ENCODE measurements at regions of chr16 and their contacts with region 1.

Region 1: DNA sequence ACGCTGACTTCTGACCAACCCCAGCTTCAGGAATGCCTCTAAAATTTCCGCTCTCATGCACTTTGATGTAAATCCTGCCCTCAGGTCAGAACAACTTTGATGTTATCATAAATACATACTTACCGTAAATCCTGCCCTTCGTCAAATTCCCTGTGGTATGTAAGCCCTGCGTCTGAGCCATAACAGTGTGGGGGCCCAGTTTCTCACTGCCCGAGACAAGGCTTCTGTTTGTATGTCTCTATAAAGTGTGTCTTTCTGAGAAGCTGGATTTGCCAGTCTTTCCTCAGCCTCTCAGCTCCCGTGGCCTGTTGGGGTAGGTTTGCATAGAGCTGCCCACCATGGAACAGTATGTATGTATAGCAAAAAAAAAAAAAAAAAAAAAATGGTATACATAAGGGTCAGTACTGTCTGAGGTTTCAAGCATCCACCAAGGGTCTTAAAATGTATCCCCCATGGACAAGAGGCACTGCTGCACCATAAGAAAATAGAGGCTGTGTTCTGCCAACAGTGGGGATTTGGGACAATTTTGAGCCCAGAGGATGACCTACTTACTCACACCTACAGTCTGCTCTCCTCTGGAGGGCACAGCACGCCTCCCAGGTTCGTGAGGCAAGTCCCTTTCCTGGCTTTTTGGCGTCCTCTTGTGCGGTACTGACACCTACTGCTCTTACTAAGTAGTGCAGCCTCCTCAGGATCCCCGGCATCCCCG is 17.5 kb downstream of the PRMT7 start:
- DNase-seq: peak; percentile 74
- H3K4me3 ChIP-seq: no peak overlapping the region
- H3K27ac ChIP-seq: no peak overlapping the region
- H3K4me1 ChIP-seq: peaks cover 4% of the 10 kb centered on the region
- H3K27me3 ChIP-seq: no peaks in the 10 kb centered on the region
- CTCF ChIP-seq: peak; percentile 94 to 98

Region 2: GRCh38 chr16:67993189-67994039 is 334.9 kb before region 1 on chr16:
- CTCF ChIA-PET with region 1: no interaction called
- dilution Hi-C with region 1: no loop called
- in situ Hi-C with region 1: no loop called
- intact Hi-C with region 1: loop called (anchors 2 kb)
- DNase-seq: peak; percentile 38
- H3K4me3 ChIP-seq: peak overlapping the region in 1 of 3 experiments; percentile 30
- H3K27ac ChIP-seq: no peak overlapping the region
- H3K4me1 ChIP-seq: peaks cover 8% of the 10 kb centered on the region
- H3K27me3 ChIP-seq: no peaks in the 10 kb centered on the region
- CTCF ChIP-seq: peak; percentile 66 to 94

Region 3: GRCh38 chr16:68227183-68227793 is 101.0 kb before region 1 on chr16:
- CTCF ChIA-PET with region 1: no interaction called
- dilution Hi-C with region 1: no loop called
- in situ Hi-C with region 1: no loop called
- intact Hi-C with region 1: no loop called
- DNase-seq: no peak
- H3K4me3 ChIP-seq: no peak overlapping the region
- H3K27ac ChIP-seq: no peak overlapping the region
- H3K4me1 ChIP-seq: no peaks in the 10 kb centered on the region
- H3K27me3 ChIP-seq: no peaks in the 10 kb centered on the region
- CTCF ChIP-seq: no peak

Region 4: DNA sequence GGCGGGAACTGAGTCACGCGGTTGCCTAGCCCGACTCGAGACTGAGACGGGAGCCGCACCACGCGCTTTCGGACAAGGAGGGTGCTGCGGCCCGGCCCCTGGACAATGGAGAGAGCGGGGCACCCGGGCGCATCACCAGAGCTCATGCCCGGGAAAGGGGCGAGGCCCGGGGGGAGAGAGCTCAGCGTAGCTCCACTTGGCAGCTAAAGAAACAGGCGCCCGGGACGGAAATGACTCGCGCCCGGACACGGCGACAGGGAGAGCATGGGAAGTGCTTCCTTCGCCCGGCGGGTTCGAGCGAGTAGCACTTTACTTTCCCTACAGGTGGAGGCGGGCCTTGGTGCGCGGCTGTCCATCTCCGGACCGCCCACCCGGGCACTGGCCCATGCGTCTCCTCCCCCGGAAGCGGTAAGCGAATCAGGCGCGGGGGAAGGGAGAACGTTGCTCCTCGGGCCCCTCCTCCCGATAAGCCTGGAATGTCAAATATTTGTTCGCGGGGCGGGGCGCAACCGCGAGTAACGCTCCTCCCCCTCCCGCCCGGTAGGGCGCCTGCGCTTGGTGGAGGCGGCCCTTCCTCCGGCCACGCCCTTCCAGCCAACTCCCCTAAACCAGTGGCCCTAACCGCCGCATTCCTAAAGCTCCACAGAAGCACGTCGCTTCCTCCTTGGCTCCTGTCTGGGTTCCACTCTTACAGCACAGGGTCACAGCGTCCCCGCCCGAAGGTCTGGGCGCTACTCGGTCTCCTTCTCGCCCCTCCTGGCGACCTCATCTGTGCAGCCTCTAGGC is 90.9 kb before region 1 on chr16:
- CTCF ChIA-PET with region 1: no interaction called
- dilution Hi-C with region 1: no loop called
- in situ Hi-C with region 1: no loop called
- intact Hi-C with region 1: loop called (anchors 1 kb)
- DNase-seq: peak; percentile 99
- H3K4me3 ChIP-seq: peak overlapping the region; percentile 67 to 69 (median 67)
- H3K27ac ChIP-seq: peak overlapping the region; percentile 82
- H3K4me1 ChIP-seq: peaks cover 36% of the 10 kb centered on the region
- H3K27me3 ChIP-seq: no peaks in the 10 kb centered on the region
- CTCF ChIP-seq: no peak

Region 5: DNA sequence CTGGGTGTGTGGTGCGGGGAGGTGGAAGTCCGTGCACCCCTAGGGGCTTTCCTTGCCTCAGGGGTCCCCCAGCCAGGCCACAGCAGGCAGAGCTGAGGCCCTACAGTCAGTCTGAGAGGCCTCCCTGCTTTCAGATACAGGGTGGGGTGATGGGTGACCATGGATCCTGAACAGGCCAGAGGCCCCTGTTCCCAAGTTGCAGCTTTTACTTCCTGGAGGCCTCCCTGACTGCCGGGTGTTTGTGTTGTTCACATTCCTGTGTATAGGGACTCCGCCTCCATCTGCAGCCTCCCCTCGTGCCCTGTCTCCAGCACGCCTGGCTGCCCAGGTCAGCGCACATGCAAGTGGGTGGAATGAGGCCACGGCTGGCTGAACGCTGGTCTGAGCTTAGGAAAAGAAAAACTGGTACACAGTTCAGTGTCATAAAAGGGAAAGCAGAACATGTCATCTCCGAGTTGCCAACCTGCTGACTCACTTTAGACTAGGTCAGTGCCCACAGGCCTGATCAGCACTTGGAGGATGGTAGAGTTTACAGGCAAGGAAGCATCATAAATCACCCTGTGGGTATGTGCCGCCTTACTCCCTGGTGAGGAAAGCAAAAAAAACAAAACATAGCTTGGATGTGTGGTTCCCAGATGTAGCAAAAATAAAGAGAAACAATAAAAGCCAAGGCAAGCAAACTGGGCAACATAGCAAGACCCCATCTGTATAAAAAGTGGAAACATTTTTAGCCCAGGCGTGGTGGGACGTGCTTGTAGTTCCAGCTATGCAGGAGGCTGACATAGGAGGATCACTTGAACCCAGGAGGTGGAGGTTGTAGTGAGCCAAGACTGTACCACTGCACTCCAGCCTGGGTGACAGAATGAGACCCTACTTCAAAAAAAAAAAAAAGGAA is 70.2 kb before region 1 on chr16:
- CTCF ChIA-PET with region 1: interaction called, 4 read pairs
- dilution Hi-C with region 1: no loop called
- in situ Hi-C with region 1: loop called (anchors 5 kb)
- intact Hi-C with region 1: loop called (anchors 1 kb)
- DNase-seq: peak; percentile 54
- H3K4me3 ChIP-seq: no peak overlapping the region
- H3K27ac ChIP-seq: no peak overlapping the region
- H3K4me1 ChIP-seq: peaks cover 8% of the 10 kb centered on the region
- H3K27me3 ChIP-seq: no peaks in the 10 kb centered on the region
- CTCF ChIP-seq: no peak

Region 6: DNA sequence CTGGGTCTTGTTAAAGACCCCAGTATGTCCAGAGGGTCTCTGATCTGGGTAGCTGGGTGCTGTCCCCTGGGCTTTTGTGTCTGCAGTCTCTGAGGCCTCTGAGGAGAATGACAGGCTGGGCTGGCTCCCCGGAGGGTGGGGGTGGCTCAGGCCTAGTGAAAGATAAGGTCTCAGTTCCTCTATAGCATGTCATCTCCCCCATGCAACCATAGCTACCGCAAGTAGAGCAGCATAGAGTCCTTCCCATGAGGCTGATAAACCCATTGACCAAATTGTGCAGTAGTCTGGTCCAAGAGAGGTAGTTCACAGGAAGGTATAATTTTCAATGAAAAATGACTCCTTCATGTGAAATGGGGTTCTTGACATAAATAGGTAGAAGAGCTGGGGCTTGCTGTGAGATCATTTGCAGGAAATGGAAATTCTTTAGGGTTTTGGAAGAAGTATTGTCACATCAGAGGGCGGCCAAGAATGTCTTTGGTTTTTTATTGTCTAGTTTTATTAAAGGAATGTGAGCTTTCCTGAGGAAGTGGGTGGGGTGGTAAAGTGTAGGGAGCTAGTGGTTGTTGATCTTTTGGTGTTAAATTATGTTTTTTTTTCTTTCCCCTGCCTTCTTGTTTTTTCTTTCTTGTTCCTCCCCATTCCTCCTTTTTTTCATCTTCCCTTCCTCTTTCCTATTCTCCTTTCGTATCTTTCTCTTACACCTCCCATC is 38.5 kb before region 1 on chr16:
- CTCF ChIA-PET with region 1: no interaction called
- dilution Hi-C with region 1: loop called (anchors 5 kb)
- in situ Hi-C with region 1: no loop called
- intact Hi-C with region 1: no loop called
- DNase-seq: no peak
- H3K4me3 ChIP-seq: no peak overlapping the region
- H3K27ac ChIP-seq: no peak overlapping the region
- H3K4me1 ChIP-seq: peaks cover 14% of the 10 kb centered on the region
- H3K27me3 ChIP-seq: no peaks in the 10 kb centered on the region
- CTCF ChIP-seq: no peak

Region 7: DNA sequence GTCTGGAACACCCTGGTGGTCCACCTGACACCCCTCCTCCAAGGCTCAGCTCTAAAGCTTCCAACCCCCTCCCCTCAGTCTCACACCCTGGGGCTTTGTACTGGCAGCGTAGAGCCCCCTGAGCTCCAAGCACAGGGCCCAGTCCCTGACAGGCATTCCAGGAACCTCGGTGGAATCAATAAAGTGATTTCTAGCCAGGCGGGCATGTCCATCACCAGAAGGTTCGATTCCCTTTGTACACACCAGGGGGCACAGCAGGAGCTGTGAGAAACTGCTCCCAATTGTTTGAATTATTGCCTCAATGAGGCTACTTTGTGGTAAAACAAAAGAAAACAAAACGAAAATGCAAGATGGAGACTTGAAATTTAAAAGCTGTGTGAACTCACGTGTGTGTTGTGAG is 68.2 kb after region 1 on chr16:
- CTCF ChIA-PET with region 1: no interaction called
- dilution Hi-C with region 1: no loop called
- in situ Hi-C with region 1: no loop called
- intact Hi-C with region 1: no loop called
- DNase-seq: peak; percentile 26
- H3K4me3 ChIP-seq: no peak overlapping the region
- H3K27ac ChIP-seq: no peak overlapping the region
- H3K4me1 ChIP-seq: no peaks in the 10 kb centered on the region
- H3K27me3 ChIP-seq: no peaks in the 10 kb centered on the region
- CTCF ChIP-seq: peak; percentile 59 to 71

Region 8: GRCh38 chr16:68420366-68420951 is 92.2 kb after region 1 on chr16:
- CTCF ChIA-PET with region 1: no interaction called
- dilution Hi-C with region 1: loop called (anchors 5 kb)
- in situ Hi-C with region 1: no loop called
- intact Hi-C with region 1: no loop called
- DNase-seq: no peak
- H3K4me3 ChIP-seq: no peak overlapping the region
- H3K27ac ChIP-seq: no peak overlapping the region
- H3K4me1 ChIP-seq: peaks cover 8% of the 10 kb centered on the region
- H3K27me3 ChIP-seq: no peaks in the 10 kb centered on the region
- CTCF ChIP-seq: no peak

Region 9: DNA sequence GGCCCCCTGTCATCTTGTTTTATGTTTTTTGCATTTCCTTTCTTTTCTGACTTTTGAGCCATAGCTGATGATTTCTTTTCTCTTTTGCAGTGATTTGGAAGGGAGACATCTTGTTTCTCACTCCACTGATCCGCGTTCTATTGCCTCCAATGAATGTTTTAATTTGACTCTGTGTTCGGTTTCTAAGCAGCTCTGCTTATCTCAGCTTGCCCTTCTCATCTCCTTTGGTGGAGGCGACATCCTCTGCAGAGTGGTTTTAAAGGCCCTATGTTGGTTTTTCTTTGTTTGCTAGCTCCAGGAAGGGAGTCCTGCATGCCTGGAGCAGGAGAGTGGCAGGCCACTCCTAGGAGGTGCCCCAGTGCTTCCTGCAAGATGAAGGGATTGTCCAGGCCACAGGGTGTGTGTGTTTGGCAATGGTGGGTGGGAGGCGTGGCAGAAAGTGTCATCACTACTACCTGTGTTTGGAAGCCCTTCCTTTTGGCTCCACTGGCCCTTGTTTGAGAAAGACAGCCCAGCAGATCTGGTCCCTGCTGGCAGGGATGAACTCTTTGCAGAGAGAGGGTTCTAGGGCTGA is 106.4 kb after region 1 on chr16:
- CTCF ChIA-PET with region 1: no interaction called
- dilution Hi-C with region 1: no loop called
- in situ Hi-C with region 1: no loop called
- intact Hi-C with region 1: no loop called
- DNase-seq: peak; percentile 15
- H3K4me3 ChIP-seq: no peak overlapping the region
- H3K27ac ChIP-seq: no peak overlapping the region
- H3K4me1 ChIP-seq: no peaks in the 10 kb centered on the region
- H3K27me3 ChIP-seq: peaks cover 3% of the 10 kb centered on the region
- CTCF ChIP-seq: no peak

Measured in mammary epithelial cell (primary cell).